Activated CD8-positive, alpha-beta T cell treated with anti-CD3 and anti-CD28 coated beads, Interleukin-2, amount 10 ng/mL, durations not matched to agents 7 days and 5 days (primary cell): ENCODE measurements at regions of chr5 and their contacts with region 1.

Region 1: DNA sequence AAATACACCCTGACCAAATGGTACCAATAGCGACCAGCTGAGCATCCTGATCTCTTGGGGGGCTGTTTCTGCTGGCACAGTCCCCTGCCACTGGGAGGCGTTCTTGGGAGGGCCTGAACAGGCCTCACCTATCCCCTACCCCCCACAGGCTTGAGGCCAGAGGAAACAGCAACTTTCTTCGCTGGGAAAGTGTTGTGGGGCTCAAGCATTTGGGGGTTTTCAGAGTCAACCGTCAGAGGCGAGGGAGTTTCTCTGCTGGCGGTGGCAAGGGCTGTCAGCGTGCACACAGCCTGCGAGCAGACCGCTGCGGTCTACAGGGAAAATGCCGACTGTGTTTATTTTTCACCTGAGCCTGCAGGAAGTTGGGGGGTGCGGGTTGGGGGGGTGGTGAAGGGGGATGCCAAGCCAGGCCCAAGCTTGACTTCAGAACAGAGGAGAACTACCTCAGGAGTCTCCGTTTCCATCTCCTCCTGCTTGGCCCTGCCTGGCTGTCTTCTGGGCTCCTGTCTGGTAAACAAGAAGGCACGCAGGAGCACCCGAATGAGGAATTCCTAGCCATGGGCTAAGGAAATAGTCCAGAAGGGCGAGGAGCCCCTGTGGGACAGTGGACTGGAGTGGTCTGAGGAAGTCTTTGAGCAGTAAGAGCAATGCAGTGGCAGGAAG is 18.0 kb downstream of the TCF7 start:
- DNase-seq: peak; percentile 89
- ATAC-seq: peak; percentile 68
- H3K4me3 Mint-ChIP-seq: peak overlapping the region; percentile 55
- H3K27ac Mint-ChIP-seq: peak overlapping the region; percentile 91
- H3K4me1 Mint-ChIP-seq: peaks cover 97% of the 10 kb centered on the region
- H3K27me3 Mint-ChIP-seq: no peaks in the 10 kb centered on the region

Region 2: DNA sequence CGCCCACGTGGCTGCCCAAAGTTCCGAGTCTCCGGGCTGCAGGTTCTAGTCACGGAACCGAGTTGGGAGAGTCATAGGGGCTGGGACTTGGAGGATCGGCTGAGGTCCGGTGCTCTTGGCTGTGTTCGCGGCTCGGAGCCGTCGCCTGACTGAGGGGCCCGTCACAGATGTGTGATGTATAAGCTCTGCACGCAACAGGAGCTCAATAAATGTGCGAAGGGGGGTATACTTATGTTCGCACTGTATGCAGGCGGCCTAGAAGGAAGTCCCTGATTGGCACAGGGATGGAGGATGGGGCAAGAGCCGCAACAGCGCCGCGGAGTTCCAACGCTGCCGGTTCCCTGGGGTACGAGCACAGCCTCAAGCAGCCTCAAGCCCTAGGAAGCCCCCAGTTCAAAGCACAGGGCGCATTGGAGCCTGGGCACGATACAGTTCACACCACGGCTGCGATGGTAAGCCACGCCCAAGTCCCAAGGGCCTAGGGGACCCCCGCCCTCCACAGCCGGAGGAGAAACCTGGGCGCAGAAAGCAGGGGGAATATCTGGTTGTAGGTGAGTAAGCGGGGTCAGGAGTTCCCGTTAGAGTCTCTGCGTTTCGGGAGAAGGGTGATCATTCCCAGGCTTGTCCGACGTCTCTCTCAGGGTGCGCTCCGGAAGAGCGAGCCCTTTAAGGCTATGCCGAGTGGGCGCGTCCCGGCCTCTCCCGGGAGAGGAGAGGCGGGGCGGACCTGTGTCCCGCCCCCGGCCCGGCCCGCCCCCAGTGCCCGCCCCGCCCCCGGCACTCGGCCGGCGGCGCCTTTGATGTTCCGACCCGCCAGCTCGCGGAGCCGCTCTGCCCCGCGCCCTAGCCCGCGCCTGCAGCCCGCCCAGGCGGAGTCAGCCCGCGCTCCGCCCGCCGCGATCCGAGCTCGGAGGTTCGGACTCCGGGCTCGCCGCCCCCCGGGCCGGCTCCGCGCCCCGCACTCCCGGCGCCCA is 18.3 kb before region 1 on chr5 and contains the start of gene TCF7:
- CTCF ChIA-PET with region 1: no interaction called
- POLR2A ChIA-PET with region 1: interaction called, 31 read pairs
- DNase-seq: peak; percentile 79
- ATAC-seq: peak; percentile 81
- H3K4me3 Mint-ChIP-seq: peak within 1 kb of the TSS; percentile 75
- H3K27ac Mint-ChIP-seq: peak within 1 kb of the TSS; percentile 68
- H3K4me1 Mint-ChIP-seq: peaks cover 76% of the 10 kb centered on the region
- H3K27me3 Mint-ChIP-seq: peaks cover 10% of the 10 kb centered on the region
- total RNA-seq, gene TCF7: 93.4 to 97.8 TPM

Region 3: GRCh38 chr5:134119720-134120119 is 12.8 kb before region 1 on chr5:
- CTCF ChIA-PET with region 1: interaction called, 167 read pairs
- POLR2A ChIA-PET with region 1: interaction called, 31 read pairs
- DNase-seq: no peak
- ATAC-seq: no peak
- H3K4me3 Mint-ChIP-seq: peak overlapping the region; percentile 69
- H3K27ac Mint-ChIP-seq: peak overlapping the region; percentile 73
- H3K4me1 Mint-ChIP-seq: peaks cover 88% of the 10 kb centered on the region
- H3K27me3 Mint-ChIP-seq: peaks cover 2% of the 10 kb centered on the region

Region 4: GRCh38 chr5:134145779-134146581 is 13.5 kb after region 1 on chr5:
- CTCF ChIA-PET with region 1: interaction called, 167 read pairs
- POLR2A ChIA-PET with region 1: interaction called, 9 read pairs
- DNase-seq: peak; percentile 87
- ATAC-seq: peak; percentile 77
- H3K4me3 Mint-ChIP-seq: no peak overlapping the region
- H3K27ac Mint-ChIP-seq: no peak overlapping the region
- H3K4me1 Mint-ChIP-seq: peaks cover 31% of the 10 kb centered on the region
- H3K27me3 Mint-ChIP-seq: no peaks in the 10 kb centered on the region

Region 5: DNA sequence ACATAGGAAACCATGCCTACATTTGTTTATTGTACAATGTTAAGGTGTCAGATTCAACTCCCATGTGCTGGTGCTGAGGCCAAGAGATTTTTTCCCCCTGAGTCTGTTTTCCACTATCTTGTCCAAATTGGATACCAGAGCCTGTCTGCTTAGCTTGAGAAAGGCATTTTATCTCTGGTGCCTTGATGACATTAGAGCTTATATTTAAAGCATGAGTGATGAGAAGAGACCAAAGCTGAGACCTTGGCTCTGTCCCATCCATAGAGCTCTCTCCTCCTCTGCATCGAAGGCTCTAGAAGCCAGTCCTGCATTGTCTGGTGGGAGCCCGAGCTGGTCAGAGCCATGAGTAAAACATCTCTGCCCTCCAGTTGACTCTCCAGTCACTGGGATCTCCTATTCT is 103.8 kb after region 1 on chr5:
- CTCF ChIA-PET with region 1: no interaction called
- POLR2A ChIA-PET with region 1: no interaction called
- DNase-seq: no peak
- ATAC-seq: no peak
- H3K4me3 Mint-ChIP-seq: no peak overlapping the region
- H3K27ac Mint-ChIP-seq: no peak overlapping the region
- H3K4me1 Mint-ChIP-seq: no peaks in the 10 kb centered on the region
- H3K27me3 Mint-ChIP-seq: peaks cover 29% of the 10 kb centered on the region

Region 6: GRCh38 chr5:134249469-134250379 is 117.2 kb after region 1 on chr5:
- CTCF ChIA-PET with region 1: no interaction called
- POLR2A ChIA-PET with region 1: no interaction called
- DNase-seq: no peak
- ATAC-seq: no peak
- H3K4me3 Mint-ChIP-seq: no peak overlapping the region
- H3K27ac Mint-ChIP-seq: no peak overlapping the region
- H3K4me1 Mint-ChIP-seq: no peaks in the 10 kb centered on the region
- H3K27me3 Mint-ChIP-seq: peaks cover 8% of the 10 kb centered on the region